ENCODE measurements at regions of chrX and their contacts with region 1.

Region 1: GRCh38 chrX:48676106-48676892 is 7.3 kb upstream of the WAS start:
- DNase-seq: peak; percentile 92
- H3K4me3 ChIP-seq: peak overlapping the region; percentile 99
- H3K27ac ChIP-seq: peak overlapping the region; percentile 85
- H3K4me1 ChIP-seq: peaks cover 39% of the 10 kb centered on the region
- CTCF ChIP-seq: no peak

Region 2: GRCh38 chrX:48648336-48648751 is 28.0 kb before region 1 on chrX:
- CTCF ChIA-PET with region 1: no interaction called
- POLR2A ChIA-PET with region 1: interaction called, 10 read pairs
- intact Hi-C with region 1: no loop called
- DNase-seq: peak; percentile 71
- H3K4me3 ChIP-seq: no peak overlapping the region
- H3K27ac ChIP-seq: no peak overlapping the region
- H3K4me1 ChIP-seq: peaks cover 7% of the 10 kb centered on the region
- CTCF ChIP-seq: peak; percentile 71

Region 3: GRCh38 chrX:48696301-48697181 is 20.2 kb after region 1 on chrX and contains the start of gene SUV39H1:
- CTCF ChIA-PET with region 1: no interaction called
- POLR2A ChIA-PET with region 1: interaction called, 3 read pairs
- intact Hi-C with region 1: loop called (anchors 1 kb)
- DNase-seq: peak; percentile 91
- H3K4me3 ChIP-seq: peak within 1 kb of the TSS; percentile 98
- H3K27ac ChIP-seq: peak within 1 kb of the TSS; percentile 75
- H3K4me1 ChIP-seq: peaks cover 17% of the 10 kb centered on the region
- CTCF ChIP-seq: no peak
- total RNA-seq, gene SUV39H1: 21.1 and 27.0 TPM in 2 replicates

Region 4: GRCh38 chrX:48801280-48802088 is 125.2 kb after region 1 on chrX and contains the start of gene HDAC6:
- CTCF ChIA-PET with region 1: interaction called, 4 read pairs
- POLR2A ChIA-PET with region 1: no interaction called
- intact Hi-C with region 1: loop called (anchors 2 kb)
- DNase-seq: peak; percentile 98
- H3K4me3 ChIP-seq: peak within 1 kb of the TSS; percentile 77
- H3K27ac ChIP-seq: peak within 1 kb of the TSS; percentile 86
- H3K4me1 ChIP-seq: peaks cover 18% of the 10 kb centered on the region
- CTCF ChIP-seq: no peak
- total RNA-seq, gene HDAC6: 62.0 and 73.6 TPM in 2 replicates

Region 5: GRCh38 chrX:48937054-48937907 is 261.0 kb after region 1 on chrX:
- CTCF ChIA-PET with region 1: no interaction called
- POLR2A ChIA-PET with region 1: no interaction called
- intact Hi-C with region 1: loop called (anchors 5 kb)
- DNase-seq: peak; percentile 91
- H3K4me3 ChIP-seq: peak overlapping the region; percentile 60
- H3K27ac ChIP-seq: peak overlapping the region; percentile 100
- H3K4me1 ChIP-seq: peaks cover 89% of the 10 kb centered on the region
- CTCF ChIP-seq: peak; percentile 74